Activated B cell treated with CpG ODN at 0.5 μM for 24 hours (primary cell): ENCODE measurements at regions of chr5 and their contacts with region 1.

Region 1: DNA sequence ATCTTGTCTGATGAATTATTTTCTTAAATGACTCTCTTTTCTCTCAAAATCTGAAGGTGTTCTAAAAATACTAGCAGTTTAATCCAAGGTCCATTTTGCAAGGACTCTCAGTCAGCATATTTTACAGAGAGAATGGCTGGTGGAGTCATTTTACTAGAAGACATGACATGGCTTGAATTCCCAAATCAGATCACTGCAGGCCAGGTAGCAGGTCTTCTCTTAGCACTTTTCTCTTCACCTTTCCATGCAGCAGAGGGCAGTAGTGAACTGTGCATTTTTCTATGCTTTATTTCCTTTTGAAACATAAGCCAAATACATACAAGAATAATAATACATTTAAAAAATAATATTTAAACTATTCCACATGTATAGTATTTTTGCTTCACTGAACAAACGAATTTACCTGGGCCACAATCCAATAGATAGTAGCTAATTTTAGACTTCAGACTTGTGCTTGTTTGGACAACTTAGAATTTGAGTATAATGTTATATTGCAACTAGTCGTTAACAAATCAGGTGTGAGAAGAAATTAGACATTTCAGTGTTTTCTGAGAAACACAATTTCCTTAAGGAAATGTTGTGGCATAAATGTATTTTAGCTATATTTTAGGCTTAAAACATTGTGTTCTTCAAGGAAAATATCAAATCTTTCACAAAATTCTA is 289.4 kb upstream of the DAB2 start:
- DNase-seq: no peak
- ATAC-seq: peak; percentile 45
- H3K4me3 Mint-ChIP-seq: no peak overlapping the region
- H3K27ac Mint-ChIP-seq: no peak overlapping the region
- H3K4me1 Mint-ChIP-seq: no peaks in the 10 kb centered on the region
- H3K27me3 Mint-ChIP-seq: no peaks in the 10 kb centered on the region
- CTCF ChIP-seq: no peak

Region 2: GRCh38 chr5:39578887-39579497 is 135.2 kb before region 1 on chr5:
- CTCF ChIA-PET with region 1: interaction called, 3 read pairs
- POLR2A ChIA-PET with region 1: no interaction called
- intact Hi-C with region 1: loop called (anchors 5 kb)
- DNase-seq: no peak
- ATAC-seq: no peak
- H3K4me3 Mint-ChIP-seq: no peak overlapping the region
- H3K27ac Mint-ChIP-seq: no peak overlapping the region
- H3K4me1 Mint-ChIP-seq: peaks cover 8% of the 10 kb centered on the region
- H3K27me3 Mint-ChIP-seq: peaks cover 2% of the 10 kb centered on the region
- CTCF ChIP-seq: peak; percentile 63

Region 3: DNA sequence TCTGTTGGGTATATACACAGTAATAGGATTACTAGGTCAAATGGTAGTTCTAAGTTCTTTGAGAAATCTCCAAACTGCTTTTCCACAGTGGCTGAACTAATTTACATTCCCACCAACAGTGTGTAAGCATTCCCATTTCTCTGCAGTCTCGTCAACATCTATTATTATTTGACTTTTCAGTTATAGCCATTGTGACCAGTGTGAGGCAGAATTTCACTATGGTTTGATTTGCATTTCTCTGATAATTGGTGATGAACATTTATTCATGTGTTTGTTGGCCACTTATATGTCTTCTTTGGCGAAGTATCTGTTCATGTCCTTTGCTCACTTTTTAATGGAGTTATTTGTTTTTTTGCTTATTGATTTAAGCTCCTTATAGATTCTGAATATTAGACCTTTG is 306.8 kb after region 1 on chr5:
- CTCF ChIA-PET with region 1: no interaction called
- POLR2A ChIA-PET with region 1: no interaction called
- intact Hi-C with region 1: loop called (anchors 1 kb)
- DNase-seq: no peak
- ATAC-seq: no peak
- H3K4me3 Mint-ChIP-seq: no peak overlapping the region
- H3K27ac Mint-ChIP-seq: no peak overlapping the region
- H3K4me1 Mint-ChIP-seq: peaks cover 27% of the 10 kb centered on the region
- H3K27me3 Mint-ChIP-seq: no peaks in the 10 kb centered on the region
- CTCF ChIP-seq: no peak